ENCODE measurements at regions of chr3 and their contacts with region 1.

Region 1: DNA sequence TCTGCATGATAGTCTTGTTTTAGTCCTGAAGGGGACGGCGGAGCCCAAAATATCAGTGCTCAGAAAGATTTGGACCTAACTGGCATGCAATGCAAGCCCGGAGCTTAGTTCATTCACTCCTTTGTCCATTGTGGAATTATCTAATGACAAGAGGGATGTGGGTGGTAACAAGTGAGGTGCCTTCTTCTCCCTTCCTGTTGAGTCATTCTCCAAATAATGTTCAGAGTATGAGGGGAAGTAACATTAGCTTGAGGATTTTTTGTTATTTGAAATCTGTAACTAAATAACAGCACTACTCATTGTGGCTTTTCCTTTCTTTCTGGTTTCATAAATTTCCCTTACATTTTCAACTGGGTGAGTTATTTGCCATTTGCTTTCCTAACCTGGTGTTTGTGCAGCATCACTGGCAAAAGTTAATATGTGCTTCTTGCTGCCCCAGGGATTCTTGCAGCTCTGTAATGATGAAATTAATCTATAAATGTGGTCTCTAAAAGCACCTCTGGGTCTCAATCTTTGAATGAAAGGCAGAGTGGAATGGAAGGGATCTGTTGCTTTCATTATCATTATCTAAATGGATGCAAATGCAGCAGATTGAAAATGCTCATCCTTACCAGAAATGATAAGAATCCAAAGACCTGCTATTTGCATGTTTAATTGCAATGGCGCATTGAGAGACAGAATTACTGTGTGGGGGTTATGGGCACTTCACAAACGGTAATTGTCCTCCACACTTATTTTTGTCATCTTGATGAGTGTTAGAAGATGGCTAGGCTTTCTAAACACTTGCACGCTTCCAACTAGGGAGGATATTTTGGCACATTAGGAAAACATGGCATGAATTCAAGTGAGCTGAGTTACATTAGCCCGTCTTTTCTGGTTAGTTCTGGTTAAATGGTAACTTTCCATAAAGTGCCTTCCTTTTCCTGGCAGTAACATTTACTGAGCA is 89.9 kb upstream of the MITF start:
- DNase-seq: peak; percentile 69
- H3K4me3 ChIP-seq: peak overlapping the region in 2 of 3 experiments; percentile 4 to 40
- H3K27ac ChIP-seq: peak overlapping the region; percentile 66
- H3K4me1 ChIP-seq: peaks cover 28% of the 10 kb centered on the region
- H3K27me3 ChIP-seq: no peaks in the 10 kb centered on the region
- CTCF ChIP-seq: no peak
- POLR2A ChIP-seq: no peak

Region 2: DNA sequence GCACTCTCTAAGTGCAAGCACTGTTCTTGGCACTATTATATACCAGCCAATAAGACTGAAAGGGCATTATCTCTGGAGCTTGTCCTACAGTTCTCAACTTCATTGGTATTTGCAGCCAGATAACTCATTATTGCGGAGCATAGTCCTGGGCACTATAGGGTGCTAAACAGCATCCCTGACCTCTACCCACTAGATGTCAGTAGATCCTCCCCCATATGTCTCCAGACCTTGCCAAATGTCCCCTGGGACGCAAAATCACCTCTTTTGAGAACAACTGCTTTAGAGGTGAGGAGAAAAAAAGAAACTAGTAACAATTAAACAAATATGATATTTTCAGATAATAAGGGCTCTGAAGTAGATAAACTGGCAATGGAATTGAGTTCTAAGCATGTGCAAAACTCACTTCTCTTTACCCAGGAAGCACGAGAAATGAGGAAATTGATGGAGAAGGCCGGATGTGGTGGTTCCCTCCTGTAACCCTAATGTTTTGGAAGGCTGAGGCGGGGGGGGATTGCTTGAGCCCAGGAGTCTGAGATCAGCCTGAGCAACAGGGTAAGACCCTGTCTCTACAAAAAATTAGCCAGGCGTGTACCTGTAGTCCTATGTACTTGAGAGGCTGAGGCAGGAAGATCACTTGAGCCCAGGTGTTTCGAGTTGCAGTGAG is 324.9 kb before region 1 on chr3:
- CTCF ChIA-PET with region 1: no interaction called
- POLR2A ChIA-PET with region 1: no interaction called
- dilution Hi-C with region 1: no loop called
- intact Hi-C with region 1: no loop called
- DNase-seq: no peak
- H3K4me3 ChIP-seq: no peak overlapping the region
- H3K27ac ChIP-seq: no peak overlapping the region
- H3K4me1 ChIP-seq: peaks cover 28% of the 10 kb centered on the region
- H3K27me3 ChIP-seq: no peaks in the 10 kb centered on the region
- CTCF ChIP-seq: no peak
- POLR2A ChIP-seq: no peak

Region 3: DNA sequence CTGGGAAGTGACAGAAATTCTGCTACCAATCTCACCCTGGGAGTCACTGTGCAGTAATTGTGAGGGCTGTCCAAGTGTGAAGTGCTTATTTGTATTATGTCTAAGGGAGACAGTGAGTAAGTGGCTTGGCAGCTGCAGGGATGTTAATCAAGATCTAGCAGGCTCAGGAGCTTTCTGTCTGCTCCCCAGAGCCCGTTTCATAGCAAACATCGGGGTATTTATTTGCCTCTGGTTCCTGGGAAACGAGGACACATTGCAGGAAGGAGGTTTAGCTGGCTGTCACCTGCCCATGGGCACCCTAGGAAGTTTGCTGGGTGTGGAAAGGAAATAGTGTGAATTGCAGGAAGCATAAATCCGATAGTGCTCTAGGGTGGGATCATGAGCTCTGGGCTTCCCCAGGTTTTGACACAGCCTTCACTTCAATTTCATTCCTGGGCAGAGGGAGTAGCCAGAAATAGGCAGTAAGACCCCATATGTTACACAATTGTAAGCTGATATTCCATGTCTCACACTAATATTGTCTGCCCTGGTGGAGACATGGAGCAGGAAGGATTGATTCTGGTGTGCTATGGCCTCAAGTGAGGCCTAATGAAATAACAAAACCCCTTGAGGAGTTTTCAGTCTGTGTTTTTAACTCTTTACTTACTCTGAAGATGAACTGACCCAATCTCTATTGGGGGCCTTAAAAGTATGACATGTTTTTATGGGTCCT is 15.8 kb after region 1 on chr3:
- CTCF ChIA-PET with region 1: interaction called, 15 read pairs
- POLR2A ChIA-PET with region 1: no interaction called
- dilution Hi-C with region 1: no loop called
- intact Hi-C with region 1: loop called (anchors 1 kb)
- DNase-seq: peak; percentile 86
- H3K4me3 ChIP-seq: no peak overlapping the region
- H3K27ac ChIP-seq: peak overlapping the region; percentile 56
- H3K4me1 ChIP-seq: peaks cover 28% of the 10 kb centered on the region
- H3K27me3 ChIP-seq: no peaks in the 10 kb centered on the region
- CTCF ChIP-seq: no peak
- POLR2A ChIP-seq: no peak

Region 4: GRCh38 chr3:69821133-69821532 is 171.7 kb after region 1 on chr3:
- CTCF ChIA-PET with region 1: no interaction called
- POLR2A ChIA-PET with region 1: no interaction called
- dilution Hi-C with region 1: no loop called
- intact Hi-C with region 1: no loop called
- DNase-seq: no peak
- H3K4me3 ChIP-seq: no peak overlapping the region
- H3K27ac ChIP-seq: no peak overlapping the region
- H3K4me1 ChIP-seq: no peaks in the 10 kb centered on the region
- H3K27me3 ChIP-seq: no peaks in the 10 kb centered on the region
- CTCF ChIP-seq: no peak
- POLR2A ChIP-seq: no peak

Measured in endothelial cell of umbilical vein (primary cell).